Posterior vena cava (tissue), 2 donors: ENCODE measurements at regions of chrX and their contacts with region 1.

Region 1: DNA sequence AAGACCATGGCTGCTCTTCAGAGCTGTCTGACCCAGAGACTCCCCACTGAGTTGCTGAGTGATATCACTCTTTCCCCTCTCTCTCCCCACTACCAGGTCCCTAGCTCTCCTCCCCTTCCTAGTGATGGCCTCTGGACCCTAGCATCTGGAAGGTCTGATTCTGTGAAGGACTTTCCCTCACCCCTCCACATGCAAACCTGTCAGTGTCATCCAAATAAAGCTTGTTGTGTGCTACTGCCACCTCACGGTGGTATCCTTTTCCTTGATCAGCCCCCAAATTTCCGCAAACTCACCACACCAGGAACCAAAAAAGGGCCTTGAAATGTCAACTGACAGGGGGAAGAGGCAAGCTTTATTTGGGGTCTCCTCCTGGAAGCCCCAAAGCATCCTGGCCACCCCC is 500.2 kb downstream of the IDS start:
- DNase-seq: no peak

Region 2: GRCh38 chrX:148523303-148524080 is 481.4 kb before region 1 on chrX:
- intact Hi-C with region 1: loop called in 1 of 2 experiments (anchors 5 kb)
- DNase-seq: no peak

Region 3: DNA sequence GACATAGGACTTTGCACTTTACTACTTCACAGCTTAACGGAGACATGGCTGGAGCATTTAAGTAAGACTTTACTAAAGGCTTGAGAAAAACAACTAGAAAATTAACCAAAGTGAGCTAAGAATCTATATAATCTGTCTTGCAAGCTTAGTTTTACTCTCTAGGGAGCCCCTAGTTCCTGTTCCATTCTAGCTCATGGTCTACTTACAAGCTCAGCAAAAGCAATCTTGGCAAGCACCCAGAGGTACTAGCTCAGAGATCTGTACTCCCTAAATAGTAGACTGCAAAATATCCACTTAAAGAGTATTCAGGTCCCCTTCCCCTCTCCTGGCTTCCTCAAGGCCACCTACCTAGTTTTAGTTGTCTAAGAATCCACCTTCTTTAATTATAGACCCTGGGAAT is 31.1 kb after region 1 on chrX:
- intact Hi-C with region 1: loop called in 1 of 2 experiments (anchors 1 kb)
- DNase-seq: no peak